PC-9 (cell line): ENCODE measurements at regions of chr10 and their contacts with region 1.

Region 1: DNA sequence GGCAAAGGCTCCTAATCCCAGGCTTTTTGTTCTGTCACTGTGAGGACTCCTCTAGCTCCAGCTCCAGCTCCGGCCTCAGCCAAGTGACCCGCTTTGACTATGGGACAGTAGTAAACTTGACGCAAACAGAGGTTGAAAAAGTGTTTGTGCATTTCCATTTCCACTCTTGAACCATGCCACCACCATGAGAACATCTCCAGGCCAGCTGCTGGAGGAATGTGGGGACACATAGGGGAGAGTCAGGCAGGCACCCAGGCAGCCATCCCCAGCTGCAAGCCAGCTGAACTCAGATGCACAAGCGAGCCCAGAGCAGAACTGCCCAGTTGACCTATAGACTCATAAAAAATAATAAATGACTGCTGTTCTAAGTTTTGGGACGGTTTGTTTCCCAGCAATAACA is 224.7 kb downstream of the GRID1 start:
- DNase-seq: no peak
- H3K4me3 ChIP-seq: no peak overlapping the region
- H3K27ac ChIP-seq: no peak overlapping the region
- H3K4me1 ChIP-seq: no peaks in the 10 kb centered on the region
- H3K27me3 ChIP-seq: peaks cover 18% of the 10 kb centered on the region; the same call in 1 of the 2 replicates
- CTCF ChIP-seq: no peak

Region 2: GRCh38 chr10:86100581-86101061 is 41.3 kb before region 1 on chr10:
- CTCF ChIA-PET with region 1: interaction called, 13 read pairs
- POLR2A ChIA-PET with region 1: no interaction called
- intact Hi-C with region 1: no loop called
- DNase-seq: no peak
- H3K4me3 ChIP-seq: no peak overlapping the region
- H3K27ac ChIP-seq: no peak overlapping the region
- H3K4me1 ChIP-seq: no peaks in the 10 kb centered on the region
- H3K27me3 ChIP-seq: no peaks in the 10 kb centered on the region
- CTCF ChIP-seq: peak; percentile 50

Region 3: GRCh38 chr10:86203162-86203905 is 61.4 kb after region 1 on chr10:
- CTCF ChIA-PET with region 1: no interaction called
- POLR2A ChIA-PET with region 1: no interaction called
- intact Hi-C with region 1: no loop called
- DNase-seq: peak in 1 of 2 experiments; percentile 10
- H3K4me3 ChIP-seq: no peak overlapping the region
- H3K27ac ChIP-seq: no peak overlapping the region
- H3K4me1 ChIP-seq: no peaks in the 10 kb centered on the region
- H3K27me3 ChIP-seq: no peaks in the 10 kb centered on the region; the same call in 1 of the 2 replicates
- CTCF ChIP-seq: no peak